Endothelial cell of umbilical vein (primary cell): ENCODE measurements at regions of chr16 and their contacts with region 1.

Region 1: DNA sequence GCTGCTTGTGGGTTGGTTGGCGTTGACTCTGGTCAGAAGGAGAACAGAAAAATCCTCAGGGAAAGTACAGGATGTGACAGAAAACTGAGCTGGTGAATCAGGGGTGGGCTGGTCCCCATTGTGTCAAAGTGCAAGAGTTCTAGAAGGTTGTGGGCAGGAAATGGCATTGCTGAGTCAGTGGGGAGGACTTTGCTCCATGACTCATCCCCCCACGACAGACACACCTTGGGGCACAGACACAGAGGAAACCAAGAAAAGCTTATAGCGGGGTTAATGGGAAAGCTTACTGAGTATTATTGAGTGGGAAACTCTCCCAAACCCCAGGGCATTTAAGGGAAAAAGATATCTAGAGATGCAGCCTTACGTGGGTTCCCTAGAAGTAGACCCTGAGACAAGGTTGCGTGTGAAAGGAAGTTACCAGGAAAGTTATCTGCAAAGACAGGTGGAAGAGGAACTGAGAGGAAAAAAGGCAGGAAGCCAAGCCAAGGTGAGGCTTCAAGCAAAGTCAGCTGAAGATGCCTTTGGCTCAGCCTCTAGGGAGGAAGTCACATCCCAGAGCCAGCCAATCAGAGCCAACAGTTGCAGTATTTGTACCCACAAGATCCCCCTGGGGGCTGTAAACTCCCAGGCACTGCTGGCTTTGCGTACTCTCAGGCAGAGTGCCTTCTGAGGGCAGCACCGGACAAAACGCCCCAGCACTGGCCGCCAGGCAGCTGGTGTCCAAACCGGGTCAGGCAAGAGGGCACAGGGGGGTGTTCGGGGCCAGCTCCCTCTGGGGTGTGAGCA is 86.4 kb downstream of the FOXL1 start:
- DNase-seq: peak; percentile 94
- H3K4me3 ChIP-seq: no peak overlapping the region
- H3K27ac ChIP-seq: peak overlapping the region; percentile 95
- H3K4me1 ChIP-seq: peaks cover 60% of the 10 kb centered on the region
- H3K27me3 ChIP-seq: no peaks in the 10 kb centered on the region
- CTCF ChIP-seq: no peak
- POLR2A ChIP-seq: no peak

Region 2: DNA sequence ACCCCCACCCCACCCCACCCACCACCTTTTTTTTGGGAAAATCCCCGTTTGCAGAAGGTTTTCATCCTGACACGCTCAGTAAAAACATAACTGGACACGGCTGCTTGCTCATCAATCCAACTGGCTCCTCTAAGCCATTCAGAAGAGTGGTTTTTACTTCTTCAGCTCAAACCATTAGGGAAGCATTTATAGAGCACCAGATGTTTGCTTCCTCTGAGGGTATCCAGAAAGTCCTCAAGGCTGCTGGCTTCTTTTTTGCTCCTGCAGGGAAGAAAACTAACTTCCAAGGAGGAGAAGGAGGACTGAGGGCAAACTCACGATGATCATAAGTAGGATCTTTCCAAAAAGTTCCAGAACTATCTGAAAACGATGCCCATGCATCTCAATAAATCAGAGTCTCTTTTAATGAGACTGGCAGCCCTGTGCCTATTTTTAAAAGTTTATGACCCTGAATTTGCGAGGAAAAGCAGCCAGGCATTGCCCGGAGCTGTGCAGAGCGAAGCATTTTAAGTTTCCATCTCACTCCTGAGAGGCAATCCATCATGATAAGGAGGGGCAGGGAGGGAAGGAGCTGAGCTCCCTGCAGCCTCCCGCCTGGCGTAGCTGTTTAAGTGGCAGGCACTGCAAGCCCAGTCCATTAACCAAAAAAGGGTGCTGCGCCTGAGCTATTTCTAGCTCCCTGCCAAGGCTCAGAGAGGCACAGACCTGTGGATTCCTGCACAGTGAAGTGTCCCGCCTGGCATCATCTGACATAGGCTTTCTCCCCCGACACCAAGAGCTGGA is 300.7 kb before region 1 on chr16:
- CTCF ChIA-PET with region 1: no interaction called
- POLR2A ChIA-PET with region 1: no interaction called
- dilution Hi-C with region 1: no loop called
- intact Hi-C with region 1: no loop called
- DNase-seq: no peak
- H3K4me3 ChIP-seq: no peak overlapping the region
- H3K27ac ChIP-seq: no peak overlapping the region
- H3K4me1 ChIP-seq: no peaks in the 10 kb centered on the region
- H3K27me3 ChIP-seq: peaks cover 17 to 27% of the 10 kb centered on the region in 2 experiments
- CTCF ChIP-seq: no peak
- POLR2A ChIP-seq: no peak

Region 3: DNA sequence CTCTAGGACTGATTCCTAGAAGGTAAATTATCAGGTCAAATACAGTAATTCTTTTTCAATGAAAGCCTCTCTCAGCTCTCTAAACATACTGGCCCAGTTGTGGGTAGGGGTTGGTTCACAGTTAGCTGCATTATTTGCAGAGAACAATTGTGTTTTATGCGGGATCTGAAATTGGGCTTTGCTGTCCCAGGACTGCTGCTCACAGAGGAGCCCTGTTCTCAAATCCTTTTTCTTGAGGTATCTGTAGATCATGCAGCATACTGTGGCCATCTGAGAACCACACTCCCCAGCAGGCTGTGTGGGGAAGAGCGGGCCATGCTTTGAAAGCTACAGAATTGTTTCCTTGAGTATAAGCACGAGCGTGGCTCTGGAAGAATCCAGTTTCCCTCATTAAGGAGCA is 127.2 kb before region 1 on chr16:
- CTCF ChIA-PET with region 1: no interaction called
- POLR2A ChIA-PET with region 1: no interaction called
- dilution Hi-C with region 1: no loop called
- intact Hi-C with region 1: no loop called
- DNase-seq: no peak
- H3K4me3 ChIP-seq: no peak overlapping the region
- H3K27ac ChIP-seq: no peak overlapping the region
- H3K4me1 ChIP-seq: no peaks in the 10 kb centered on the region
- H3K27me3 ChIP-seq: no peaks in the 10 kb centered on the region
- CTCF ChIP-seq: no peak
- POLR2A ChIP-seq: no peak

Region 4: GRCh38 chr16:86570558-86571529 is 93.9 kb before region 1 on chr16:
- CTCF ChIA-PET with region 1: interaction called, 15 read pairs
- POLR2A ChIA-PET with region 1: interaction called, 8 read pairs
- dilution Hi-C with region 1: no loop called
- intact Hi-C with region 1: loop called (anchors 2 kb)
- DNase-seq: peak; percentile 57
- H3K4me3 ChIP-seq: peak overlapping the region; percentile 88 to 99 (median 94)
- H3K27ac ChIP-seq: peak overlapping the region; percentile 78
- H3K4me1 ChIP-seq: peaks cover 35% of the 10 kb centered on the region
- H3K27me3 ChIP-seq: no peaks in the 10 kb centered on the region
- CTCF ChIP-seq: no peak
- POLR2A ChIP-seq: no peak

Region 5: DNA sequence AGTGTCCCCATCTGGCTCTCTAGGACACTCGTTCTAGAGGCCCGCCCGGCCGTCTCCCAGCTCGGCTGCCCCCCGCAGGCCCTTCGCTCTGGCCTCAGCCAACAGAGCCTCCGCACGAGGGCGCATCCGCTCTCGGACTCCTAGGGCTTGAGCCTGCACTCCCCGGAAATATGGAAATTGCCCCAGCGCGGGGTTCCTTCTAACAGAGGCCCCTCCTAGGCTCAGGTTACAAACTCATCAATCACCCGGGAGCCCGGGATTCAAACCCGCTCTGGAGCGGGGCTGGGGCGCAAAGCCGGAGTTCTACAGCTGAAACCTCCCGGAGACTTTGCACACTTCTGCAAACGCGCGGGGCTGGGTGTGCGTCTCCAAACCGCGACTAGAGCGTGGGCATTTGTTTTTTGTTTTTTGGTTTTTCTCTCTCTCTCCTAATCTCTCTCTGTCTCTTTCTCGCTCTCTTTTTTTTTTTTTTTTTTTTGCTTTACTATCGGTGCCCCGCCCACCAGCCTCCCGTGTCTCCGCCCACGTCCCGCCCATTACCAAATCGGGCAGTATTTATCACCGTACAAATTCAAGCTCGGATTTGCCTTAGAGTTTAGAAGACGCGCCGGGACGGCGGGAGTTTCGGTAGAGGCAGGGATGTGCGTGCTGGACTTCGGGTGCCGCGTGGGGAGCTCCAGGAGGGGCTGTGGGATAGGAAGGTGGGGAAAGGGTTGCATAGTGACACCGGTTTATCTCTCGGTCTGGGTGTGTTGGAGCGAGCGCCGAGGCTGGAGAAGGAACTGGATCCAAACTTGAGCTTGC is 88.8 kb before region 1 on chr16:
- CTCF ChIA-PET with region 1: interaction called, 15 read pairs
- POLR2A ChIA-PET with region 1: interaction called, 8 read pairs
- dilution Hi-C with region 1: no loop called
- intact Hi-C with region 1: loop called (anchors 2 kb)
- DNase-seq: peak; percentile 92
- H3K4me3 ChIP-seq: peak overlapping the region; percentile 33 to 67 (median 62)
- H3K27ac ChIP-seq: peak overlapping the region; percentile 82
- H3K4me1 ChIP-seq: peaks cover 56% of the 10 kb centered on the region
- H3K27me3 ChIP-seq: no peaks in the 10 kb centered on the region
- CTCF ChIP-seq: peak; percentile 73 to 74
- POLR2A ChIP-seq: peak; percentile 83